Mammary epithelial cell (primary cell): ENCODE measurements at regions of chr14 and their contacts with region 1.

Region 1: DNA sequence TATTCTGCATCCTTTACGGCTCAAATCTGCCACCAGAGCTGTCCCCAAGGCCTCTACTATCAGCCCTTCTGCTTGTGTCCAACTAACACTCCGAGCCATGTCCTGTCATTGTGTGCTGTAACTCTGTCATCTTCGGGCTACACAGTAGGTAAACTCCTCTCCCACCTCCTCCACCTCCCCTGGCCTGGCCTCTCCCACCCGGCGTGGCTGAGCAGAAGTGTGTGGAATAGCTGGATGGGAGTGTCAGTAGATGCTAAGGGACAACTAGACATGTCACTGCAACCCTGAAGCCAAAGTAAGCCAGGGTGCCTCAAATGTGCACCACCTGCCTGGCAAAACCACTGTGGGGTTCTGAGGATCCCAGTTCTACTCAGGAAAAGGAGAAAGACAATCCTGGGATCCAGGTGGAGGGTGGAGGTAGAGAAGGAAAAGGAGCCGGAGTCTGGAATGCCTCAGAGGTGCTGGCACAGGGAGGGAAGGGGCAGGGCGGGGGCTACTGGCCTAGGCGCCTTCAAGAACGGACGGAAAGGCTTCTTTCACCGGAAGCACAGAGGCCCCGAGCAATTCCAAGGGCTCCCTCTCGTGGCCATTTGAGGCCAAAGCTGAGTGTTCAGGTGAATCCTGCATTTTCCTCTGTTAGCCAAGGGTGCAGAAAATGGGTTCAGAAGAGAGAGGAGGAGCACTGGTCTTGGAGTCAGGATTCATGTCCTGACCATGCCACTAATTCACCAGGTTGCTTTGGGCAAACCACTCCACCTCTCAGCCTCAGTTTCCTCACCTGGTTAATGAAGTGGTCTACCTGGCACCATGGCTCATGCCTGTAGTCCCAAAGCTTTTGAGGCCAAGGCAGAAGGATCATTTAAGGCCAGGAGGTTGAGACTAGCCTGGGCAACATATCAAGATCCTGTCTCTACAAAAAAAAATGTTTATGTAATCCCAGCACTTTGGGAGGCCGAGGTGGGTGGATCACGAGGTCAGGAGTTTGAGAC is 20.5 kb upstream of the FAM181A start:
- DNase-seq: peak; percentile 43
- H3K4me3 ChIP-seq: no peak overlapping the region
- H3K27ac ChIP-seq: no peak overlapping the region
- H3K4me1 ChIP-seq: no peaks in the 10 kb centered on the region
- H3K27me3 ChIP-seq: no peaks in the 10 kb centered on the region
- CTCF ChIP-seq: peak; percentile 79 to 86

Region 2: DNA sequence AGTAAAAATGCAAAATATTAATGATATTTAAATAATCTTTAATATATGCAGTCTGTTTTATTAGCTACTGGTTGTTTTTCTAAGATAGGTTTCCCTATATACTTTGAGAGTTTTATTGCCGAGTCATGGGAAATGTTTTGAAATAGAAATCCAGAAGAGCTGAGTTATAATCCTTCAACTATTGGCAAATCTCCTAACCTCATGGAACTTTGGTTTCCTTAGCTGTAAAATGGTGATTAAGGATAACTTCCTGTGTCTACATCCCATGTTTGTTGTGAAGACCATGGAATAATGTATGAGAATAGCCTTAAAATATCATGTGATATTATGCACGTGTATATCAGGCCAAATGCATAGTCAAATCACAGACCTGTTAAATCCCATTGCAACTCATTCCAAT is 424.9 kb before region 1 on chr14:
- CTCF ChIA-PET with region 1: interaction called, 12 read pairs
- dilution Hi-C with region 1: no loop called
- in situ Hi-C with region 1: no loop called
- intact Hi-C with region 1: no loop called
- DNase-seq: no peak
- H3K4me3 ChIP-seq: no peak overlapping the region
- H3K27ac ChIP-seq: no peak overlapping the region
- H3K4me1 ChIP-seq: no peaks in the 10 kb centered on the region
- H3K27me3 ChIP-seq: no peaks in the 10 kb centered on the region
- CTCF ChIP-seq: no peak

Region 3: DNA sequence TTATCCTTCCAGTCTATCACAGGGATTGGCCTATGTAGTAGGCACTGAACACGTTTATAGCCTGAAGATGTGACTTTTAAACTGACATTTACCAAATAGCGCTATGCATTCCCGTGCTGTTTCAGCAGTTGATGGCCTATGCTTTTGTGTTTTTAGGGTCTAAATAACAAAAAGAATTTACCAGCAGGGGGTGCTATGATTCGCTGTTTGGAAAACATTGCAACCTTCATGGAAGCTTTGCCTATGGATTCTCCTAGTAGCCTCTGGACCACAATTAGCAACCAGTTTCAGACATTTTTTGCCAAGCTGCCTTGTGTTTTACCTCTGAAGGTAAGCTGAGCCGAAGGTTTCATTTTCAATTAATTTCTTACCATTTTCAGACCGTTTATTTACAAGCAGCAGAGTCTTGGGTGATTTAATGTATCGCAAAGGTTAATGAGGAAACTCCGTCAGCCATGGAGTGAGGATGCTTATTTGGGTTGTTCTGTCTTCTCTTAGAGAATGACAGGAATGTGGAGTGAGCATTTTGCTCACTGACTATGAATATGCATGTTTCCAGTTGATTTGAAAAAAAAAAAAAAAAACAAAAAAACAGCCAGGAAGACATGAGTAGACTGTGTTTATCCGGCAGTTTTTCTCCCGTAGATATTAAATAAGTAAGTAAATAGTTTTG is 251.4 kb before region 1 on chr14:
- CTCF ChIA-PET with region 1: no interaction called
- dilution Hi-C with region 1: no loop called
- in situ Hi-C with region 1: no loop called
- intact Hi-C with region 1: loop called (anchors 1 kb)
- DNase-seq: peak; percentile 40
- H3K4me3 ChIP-seq: no peak overlapping the region
- H3K27ac ChIP-seq: no peak overlapping the region
- H3K4me1 ChIP-seq: no peaks in the 10 kb centered on the region
- H3K27me3 ChIP-seq: no peaks in the 10 kb centered on the region
- CTCF ChIP-seq: peak; percentile 39 to 57

Region 4: DNA sequence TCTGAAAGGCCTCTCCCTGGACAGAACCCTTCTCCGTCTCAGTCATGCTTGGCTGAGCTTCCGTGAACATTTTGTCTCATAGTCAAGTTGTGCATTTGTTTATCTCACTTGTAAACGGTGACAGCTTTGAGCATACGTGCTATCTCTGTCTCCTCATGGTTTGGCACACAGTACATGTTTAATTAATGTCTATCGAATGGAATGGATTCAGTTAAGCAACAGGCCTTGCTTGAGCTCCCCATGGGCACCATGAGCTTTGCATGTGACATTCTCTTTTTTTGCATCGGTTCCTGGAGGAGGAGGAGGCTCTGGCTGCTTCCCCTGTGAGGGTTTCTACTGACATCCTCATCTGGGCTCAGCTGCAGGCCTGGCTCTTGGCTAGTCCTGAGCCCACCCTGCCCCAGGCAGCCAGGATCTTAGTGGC is 198.3 kb before region 1 on chr14:
- CTCF ChIA-PET with region 1: no interaction called
- dilution Hi-C with region 1: loop called (anchors 10 kb)
- in situ Hi-C with region 1: no loop called
- intact Hi-C with region 1: no loop called
- DNase-seq: no peak
- H3K4me3 ChIP-seq: no peak overlapping the region
- H3K27ac ChIP-seq: no peak overlapping the region
- H3K4me1 ChIP-seq: peaks cover 3% of the 10 kb centered on the region
- H3K27me3 ChIP-seq: no peaks in the 10 kb centered on the region
- CTCF ChIP-seq: no peak

Region 5: GRCh38 chr14:93959239-93960107 is 52.8 kb after region 1 on chr14:
- CTCF ChIA-PET with region 1: no interaction called
- dilution Hi-C with region 1: loop called (anchors 5 kb)
- in situ Hi-C with region 1: no loop called
- intact Hi-C with region 1: no loop called
- DNase-seq: peak; percentile 100
- H3K4me3 ChIP-seq: no peak overlapping the region
- H3K27ac ChIP-seq: peak overlapping the region; percentile 87
- H3K4me1 ChIP-seq: peaks cover 41% of the 10 kb centered on the region
- H3K27me3 ChIP-seq: no peaks in the 10 kb centered on the region
- CTCF ChIP-seq: no peak